IMR-90 (cell line): ENCODE measurements at regions of chr9 and their contacts with region 1.

Region 1: DNA sequence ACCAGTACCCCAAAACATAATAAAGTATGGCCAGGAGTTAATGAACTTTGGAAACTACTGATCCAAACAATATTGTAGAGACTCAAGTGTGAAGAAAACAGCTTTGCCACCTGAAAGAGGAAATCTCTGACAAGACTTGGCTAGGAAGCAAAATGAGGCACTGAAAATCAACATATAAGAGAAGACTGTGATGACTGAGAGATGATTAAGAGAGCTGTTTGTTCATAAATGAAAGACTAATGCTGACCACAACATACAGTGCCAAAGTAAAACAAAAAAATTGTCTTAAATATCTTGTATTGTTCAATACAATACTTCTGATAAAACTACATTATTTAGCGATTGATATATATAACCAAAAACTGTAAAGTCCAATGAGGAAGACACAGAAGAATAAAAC is 7.2 kb downstream of the RC3H2 start:
- DNase-seq: peak; percentile 46
- ATAC-seq: no peak
- H3K4me3 ChIP-seq: no peak overlapping the region
- H3K27ac ChIP-seq: no peak overlapping the region
- H3K4me1 ChIP-seq: peaks cover 5% of the 10 kb centered on the region
- H3K27me3 ChIP-seq: no peaks in the 10 kb centered on the region
- CTCF ChIP-seq: no peak
- POLR2A ChIP-seq: no peak
- RAD21 ChIP-seq: no peak

Region 2: DNA sequence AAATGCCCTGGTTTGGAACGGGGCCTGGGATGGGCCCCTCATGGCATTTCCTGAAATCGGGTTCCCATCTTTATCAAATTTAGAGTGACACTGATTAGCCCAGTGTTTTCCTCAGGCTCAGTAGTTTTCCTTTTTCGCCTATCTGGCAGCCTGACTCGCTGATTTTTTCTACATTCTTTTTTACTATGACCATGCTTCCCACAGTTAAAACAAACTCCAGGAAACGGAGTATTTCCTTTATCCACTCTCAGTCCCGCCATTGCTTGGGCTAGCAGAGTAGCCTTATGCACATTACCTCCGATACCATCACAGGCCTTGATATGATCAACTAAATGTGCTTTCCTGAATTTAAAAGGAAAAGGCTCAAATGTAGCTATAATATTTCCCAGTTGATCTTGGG is 278.0 kb before region 1 on chr9:
- CTCF ChIA-PET with region 1: no interaction called
- POLR2A ChIA-PET with region 1: no interaction called
- dilution Hi-C with region 1: no loop called
- in situ Hi-C with region 1: no loop called
- intact Hi-C with region 1: no loop called
- DNase-seq: no peak
- ATAC-seq: no peak
- H3K4me3 ChIP-seq: no peak overlapping the region
- H3K27ac ChIP-seq: no peak overlapping the region
- H3K4me1 ChIP-seq: no peaks in the 10 kb centered on the region
- H3K27me3 ChIP-seq: no peaks in the 10 kb centered on the region
- CTCF ChIP-seq: no peak
- POLR2A ChIP-seq: no peak
- RAD21 ChIP-seq: no peak

Region 3: GRCh38 chr9:122860317-122861142 is 37.4 kb before region 1 on chr9:
- CTCF ChIA-PET with region 1: no interaction called
- POLR2A ChIA-PET with region 1: no interaction called
- dilution Hi-C with region 1: no loop called
- in situ Hi-C with region 1: no loop called
- intact Hi-C with region 1: loop called (anchors 5 kb)
- DNase-seq: no peak
- ATAC-seq: peak; percentile 35
- H3K4me3 ChIP-seq: no peak overlapping the region
- H3K27ac ChIP-seq: no peak overlapping the region
- H3K4me1 ChIP-seq: no peaks in the 10 kb centered on the region; the same call in 1 of the 2 replicates
- H3K27me3 ChIP-seq: no peaks in the 10 kb centered on the region
- CTCF ChIP-seq: no peak
- POLR2A ChIP-seq: no peak
- RAD21 ChIP-seq: no peak

Region 4: GRCh38 chr9:122883125-122883524 is 14.8 kb before region 1 on chr9:
- CTCF ChIA-PET with region 1: no interaction called
- POLR2A ChIA-PET with region 1: no interaction called
- dilution Hi-C with region 1: no loop called
- in situ Hi-C with region 1: no loop called
- intact Hi-C with region 1: loop called (anchors 2 kb)
- DNase-seq: no peak
- ATAC-seq: no peak
- H3K4me3 ChIP-seq: no peak overlapping the region
- H3K27ac ChIP-seq: no peak overlapping the region
- H3K4me1 ChIP-seq: no peaks in the 10 kb centered on the region
- H3K27me3 ChIP-seq: no peaks in the 10 kb centered on the region
- CTCF ChIP-seq: no peak
- POLR2A ChIP-seq: no peak
- RAD21 ChIP-seq: no peak